AG04450 (cell line): ENCODE measurements at regions of chr12 and their contacts with region 1.

Region 1: GRCh38 chr12:57069523-57069922 is 9.1 kb downstream of the NEMP1 start:
- DNase-seq: peak; percentile 73
- H3K4me3 ChIP-seq: no peak overlapping the region
- H3K27ac ChIP-seq: no peak overlapping the region
- H3K27me3 ChIP-seq: no peaks in the 10 kb centered on the region
- CTCF ChIP-seq: peak; percentile 90

Region 2: GRCh38 chr12:57088459-57089248 is 19.1 kb after region 1 on chr12 and contains the start of gene NAB2:
- CTCF ChIA-PET with region 1: interaction called, 27 read pairs
- POLR2A ChIA-PET with region 1: interaction called, 13 read pairs
- DNase-seq: peak; percentile 94
- H3K4me3 ChIP-seq: peak within 1 kb of the TSS; percentile 76
- H3K27ac ChIP-seq: peak within 1 kb of the TSS; percentile 100
- H3K27me3 ChIP-seq: no peaks in the 10 kb centered on the region
- CTCF ChIP-seq: no peak
- polyA plus RNA-seq, gene NAB2: 46.4 and 60.9 TPM in 2 replicates

Region 3: GRCh38 chr12:57309420-57309819 is 239.9 kb after region 1 on chr12:
- CTCF ChIA-PET with region 1: no interaction called
- POLR2A ChIA-PET with region 1: no interaction called
- DNase-seq: no peak
- H3K4me3 ChIP-seq: no peak overlapping the region
- H3K27ac ChIP-seq: no peak overlapping the region
- H3K27me3 ChIP-seq: no peaks in the 10 kb centered on the region
- CTCF ChIP-seq: no peak